Astrocyte of the cerebellum (primary cell): ENCODE measurements at regions of chr9 and their contacts with region 1.

Region 1: DNA sequence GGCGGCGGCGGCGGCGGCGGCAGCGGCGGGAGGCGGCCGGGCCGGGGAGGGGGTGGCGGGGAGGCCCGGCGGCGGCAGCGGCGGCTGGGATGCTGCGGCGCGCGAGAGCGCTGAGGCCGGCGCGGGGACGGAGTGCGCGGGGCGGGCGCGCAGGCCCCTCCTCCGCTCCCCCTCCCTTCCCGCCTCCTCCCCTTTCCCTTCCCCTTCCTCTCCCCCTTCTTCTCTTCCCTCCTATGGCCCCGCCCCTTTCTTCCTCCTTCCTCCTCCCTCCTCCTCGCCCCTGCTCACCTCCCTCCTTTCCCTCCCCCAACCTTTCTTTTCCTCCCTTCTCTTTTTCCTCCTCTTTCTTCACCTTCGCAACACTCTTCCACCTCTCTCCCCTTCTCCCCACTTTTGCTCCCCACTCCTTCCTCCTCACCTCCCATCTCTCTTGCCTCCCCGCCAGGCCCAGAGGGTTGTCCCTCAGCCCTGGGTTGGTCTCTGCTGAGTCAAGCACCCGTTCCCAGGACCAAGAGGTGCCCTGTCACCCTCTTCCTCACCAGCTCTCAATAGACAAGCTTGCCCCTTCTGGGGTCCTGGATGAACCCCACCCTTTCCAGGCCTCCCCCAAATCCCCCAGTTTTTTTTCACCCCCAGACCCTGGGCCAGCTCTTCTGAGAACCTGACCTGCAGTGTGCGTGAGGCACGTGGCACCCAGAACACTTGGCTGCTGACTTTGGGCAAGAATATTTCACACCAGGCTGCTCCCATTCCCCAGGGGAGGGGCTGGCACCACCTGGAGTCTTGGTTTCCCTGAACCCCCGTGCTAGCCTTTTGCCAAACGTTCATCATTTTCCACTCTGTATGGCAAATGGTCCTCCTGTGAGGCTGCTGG is at the start of gene SEMA4D:
- DNase-seq: no peak
- H3K4me3 ChIP-seq: peak within 1 kb of the TSS; percentile 47
- CTCF ChIP-seq: no peak

Region 2: GRCh38 chr9:89339807-89340206 is 158.4 kb before region 1 on chr9:
- in situ Hi-C with region 1: loop called (anchors 10 kb)
- DNase-seq: no peak
- H3K4me3 ChIP-seq: no peak overlapping the region
- CTCF ChIP-seq: no peak

Region 3: GRCh38 chr9:89433821-89434220 is 64.4 kb before region 1 on chr9:
- in situ Hi-C with region 1: loop called (anchors 5 kb)
- DNase-seq: no peak
- H3K4me3 ChIP-seq: no peak overlapping the region
- CTCF ChIP-seq: no peak

Region 4: DNA sequence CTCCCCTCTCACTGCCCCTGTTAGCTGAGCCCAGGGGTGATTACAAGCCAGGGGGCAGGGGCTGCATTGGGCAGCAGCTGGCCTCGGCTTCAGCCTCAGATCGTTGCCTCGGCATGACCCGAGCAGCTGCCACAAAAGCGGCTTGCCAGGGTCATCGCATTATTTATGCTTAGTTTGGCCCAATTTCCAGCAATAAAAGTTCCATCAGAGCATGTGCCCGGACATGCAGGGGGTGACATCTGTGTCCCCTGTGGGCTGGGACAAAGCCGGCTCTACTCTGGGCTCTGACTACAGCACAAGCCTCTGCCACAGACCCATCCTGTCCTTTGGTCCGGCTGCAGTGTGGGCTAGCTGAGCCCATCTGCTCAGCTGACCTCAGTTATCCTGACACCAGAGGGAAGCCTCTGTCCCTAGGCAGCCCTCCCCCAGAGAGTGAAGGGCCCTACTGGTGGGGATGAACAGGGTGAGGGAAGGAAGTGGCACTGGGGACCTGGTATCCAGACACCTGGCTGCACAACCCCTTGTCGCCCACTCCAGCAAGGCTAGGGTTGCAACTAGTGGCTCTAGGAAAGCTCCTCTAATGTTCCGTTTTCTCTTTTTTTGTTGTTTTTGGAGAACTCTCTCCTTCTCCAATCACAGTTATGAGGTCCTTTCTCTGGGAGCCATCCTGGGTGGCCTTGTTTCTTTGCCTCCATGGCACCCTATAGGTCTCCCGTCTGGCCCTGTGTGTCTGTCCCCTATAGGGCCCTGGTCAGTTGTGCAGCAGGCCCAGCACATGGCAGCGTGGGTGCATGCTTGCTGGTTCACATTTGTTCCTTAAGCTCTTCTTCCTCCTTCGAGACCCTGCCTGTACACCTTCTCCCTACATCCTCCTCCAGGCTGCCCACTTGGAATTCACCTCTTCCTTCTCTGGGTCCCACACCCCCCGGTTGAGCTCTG is 93.3 kb after region 1 on chr9:
- in situ Hi-C with region 1: no loop called
- DNase-seq: no peak
- H3K4me3 ChIP-seq: no peak overlapping the region
- CTCF ChIP-seq: no peak